ENCODE measurements at regions of chr1 and their contacts with region 1.

Region 1: GRCh38 chr1:154485106-154485505 is 16.9 kb upstream of the TDRD10 start:
- DNase-seq: no peak
- H3K4me3 ChIP-seq: no peak overlapping the region
- H3K27ac ChIP-seq: no peak overlapping the region
- H3K4me1 ChIP-seq: no peaks in the 10 kb centered on the region
- H3K27me3 ChIP-seq: peaks cover 9% of the 10 kb centered on the region; the same call in 1 of the 2 replicates

Region 2: GRCh38 chr1:154524881-154525280 is 39.8 kb after region 1 on chr1:
- in situ Hi-C with region 1: loop called (anchors 5 kb)
- DNase-seq: no peak
- H3K4me3 ChIP-seq: no peak overlapping the region
- H3K27ac ChIP-seq: no peak overlapping the region
- H3K4me1 ChIP-seq: no peaks in the 10 kb centered on the region
- H3K27me3 ChIP-seq: peaks cover 9% of the 10 kb centered on the region

Region 3: DNA sequence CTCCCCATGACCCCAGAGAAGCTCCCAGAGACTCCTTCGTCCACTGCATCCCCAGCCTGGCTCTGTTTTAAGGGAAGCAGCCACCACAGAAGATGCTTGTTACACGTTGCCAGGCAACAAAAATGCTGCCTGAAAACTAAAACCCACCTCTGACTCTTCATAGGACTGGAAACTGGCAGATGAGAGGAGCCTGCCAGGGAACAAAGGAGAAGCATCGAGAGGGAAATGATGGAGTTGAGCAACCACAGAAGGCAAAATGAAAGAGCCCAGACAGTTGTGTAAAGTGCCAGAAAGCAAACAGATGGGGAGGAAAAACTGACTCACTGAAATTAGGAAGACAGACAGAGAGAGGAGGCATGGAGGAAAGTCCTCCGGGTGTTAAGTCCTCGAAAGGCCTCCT is 266.6 kb after region 1 on chr1:
- in situ Hi-C with region 1: no loop called
- DNase-seq: peak; percentile 95
- H3K4me3 ChIP-seq: no peak overlapping the region
- H3K27ac ChIP-seq: peak overlapping the region; percentile 64
- H3K4me1 ChIP-seq: peaks cover 30% of the 10 kb centered on the region
- H3K27me3 ChIP-seq: no peaks in the 10 kb centered on the region

Region 4: DNA sequence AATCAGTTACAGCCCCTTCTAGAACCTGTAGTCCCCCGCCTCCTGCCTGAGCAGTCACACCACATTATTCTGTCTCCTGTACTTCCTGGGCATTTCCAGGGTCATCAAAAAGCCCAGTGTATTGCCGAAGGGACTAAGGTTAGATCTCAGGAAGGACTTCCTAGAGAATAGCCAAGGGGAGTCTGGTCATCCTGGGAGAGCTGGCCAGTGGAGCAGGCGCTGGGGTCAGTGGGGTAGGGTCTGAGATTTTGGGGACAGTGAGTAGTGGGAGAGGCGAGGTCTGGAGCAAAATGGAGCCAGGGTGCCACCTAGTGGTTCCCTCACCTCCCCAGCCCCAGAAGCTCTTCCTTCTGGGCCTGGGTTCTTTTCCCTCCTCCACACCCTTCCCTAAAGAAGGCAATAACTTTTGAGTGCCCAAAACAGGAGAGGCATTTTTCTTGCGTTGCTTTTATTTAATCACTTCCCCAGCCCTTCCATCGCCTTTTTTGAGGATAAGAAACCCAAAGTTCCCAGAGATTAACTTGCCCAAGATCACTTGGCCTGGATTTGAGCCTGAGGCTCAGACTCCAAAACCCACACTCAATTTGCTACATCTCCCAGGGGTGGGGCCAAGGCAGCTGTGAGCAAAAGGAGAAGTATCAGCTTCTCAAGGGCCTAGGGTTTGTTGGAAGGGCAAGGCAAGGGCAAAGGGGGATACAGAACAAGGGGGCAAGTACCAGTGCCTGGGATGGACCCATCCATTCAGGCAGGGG is 458.7 kb after region 1 on chr1:
- in situ Hi-C with region 1: no loop called
- DNase-seq: peak; percentile 48
- H3K4me3 ChIP-seq: no peak overlapping the region
- H3K27ac ChIP-seq: no peak overlapping the region
- H3K4me1 ChIP-seq: no peaks in the 10 kb centered on the region
- H3K27me3 ChIP-seq: no peaks in the 10 kb centered on the region